Activated CD4-positive, alpha-beta T cell treated with anti-CD3 and anti-CD28 coated beads, Interleukin-2, amount 10 ng/mL, durations not matched to agents 24 days and 14 days (primary cell): ENCODE measurements at regions of chr16 and their contacts with region 1.

Region 1: DNA sequence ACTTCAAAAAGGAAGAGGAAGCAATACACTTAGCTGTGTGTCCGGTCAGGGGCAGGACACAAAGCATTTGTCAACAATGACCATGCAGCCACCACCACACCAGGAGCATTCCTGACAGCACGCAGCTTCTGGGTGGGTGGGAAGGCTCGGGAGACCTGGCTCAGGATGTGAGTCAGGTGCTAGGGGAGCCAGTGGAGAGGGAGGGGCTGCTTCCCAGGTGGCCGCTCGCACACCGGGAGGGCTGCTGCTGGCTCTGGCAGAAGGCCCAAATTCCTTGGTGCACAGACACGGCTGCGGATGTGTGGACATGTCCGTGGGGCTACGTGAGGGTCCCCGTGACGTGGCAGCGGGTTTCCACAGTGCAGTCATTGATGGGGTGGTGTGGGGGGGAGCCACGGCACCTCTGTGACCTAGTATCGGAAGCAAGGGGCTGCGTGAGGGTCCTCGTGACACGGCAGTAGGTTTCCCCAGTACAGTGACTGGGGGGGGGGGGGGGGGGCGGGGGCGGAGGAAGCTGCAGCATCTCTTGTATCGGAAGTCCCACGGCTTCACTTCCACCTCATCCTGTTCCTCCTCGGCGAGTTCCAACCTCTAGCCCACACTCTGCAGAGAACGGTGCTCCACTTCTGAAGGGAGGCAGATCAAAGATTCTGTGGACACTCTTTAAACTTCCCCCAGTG is 112.8 kb downstream of the ZNF778 start:
- DNase-seq: peak; percentile 80
- H3K4me3 Mint-ChIP-seq: peak overlapping the region; percentile 17
- H3K27ac Mint-ChIP-seq: peak overlapping the region; percentile 58
- H3K4me1 Mint-ChIP-seq: peaks cover 67% of the 10 kb centered on the region
- H3K27me3 Mint-ChIP-seq: no peaks in the 10 kb centered on the region

Region 2: GRCh38 chr16:89319883-89320781 is 10.2 kb before region 1 on chr16:
- intact Hi-C with region 1: no loop called
- DNase-seq: peak; percentile 77
- H3K4me3 Mint-ChIP-seq: peak overlapping the region; percentile 71
- H3K27ac Mint-ChIP-seq: peak overlapping the region; percentile 88
- H3K4me1 Mint-ChIP-seq: peaks cover 83% of the 10 kb centered on the region
- H3K27me3 Mint-ChIP-seq: no peaks in the 10 kb centered on the region

Region 3: GRCh38 chr16:89422905-89423630 is 92.8 kb after region 1 on chr16:
- intact Hi-C with region 1: loop called (anchors 5 kb)
- DNase-seq: peak; percentile 81
- H3K4me3 Mint-ChIP-seq: peak overlapping the region; percentile 50
- H3K27ac Mint-ChIP-seq: peak overlapping the region; percentile 75
- H3K4me1 Mint-ChIP-seq: peaks cover 66% of the 10 kb centered on the region
- H3K27me3 Mint-ChIP-seq: no peaks in the 10 kb centered on the region

Region 4: DNA sequence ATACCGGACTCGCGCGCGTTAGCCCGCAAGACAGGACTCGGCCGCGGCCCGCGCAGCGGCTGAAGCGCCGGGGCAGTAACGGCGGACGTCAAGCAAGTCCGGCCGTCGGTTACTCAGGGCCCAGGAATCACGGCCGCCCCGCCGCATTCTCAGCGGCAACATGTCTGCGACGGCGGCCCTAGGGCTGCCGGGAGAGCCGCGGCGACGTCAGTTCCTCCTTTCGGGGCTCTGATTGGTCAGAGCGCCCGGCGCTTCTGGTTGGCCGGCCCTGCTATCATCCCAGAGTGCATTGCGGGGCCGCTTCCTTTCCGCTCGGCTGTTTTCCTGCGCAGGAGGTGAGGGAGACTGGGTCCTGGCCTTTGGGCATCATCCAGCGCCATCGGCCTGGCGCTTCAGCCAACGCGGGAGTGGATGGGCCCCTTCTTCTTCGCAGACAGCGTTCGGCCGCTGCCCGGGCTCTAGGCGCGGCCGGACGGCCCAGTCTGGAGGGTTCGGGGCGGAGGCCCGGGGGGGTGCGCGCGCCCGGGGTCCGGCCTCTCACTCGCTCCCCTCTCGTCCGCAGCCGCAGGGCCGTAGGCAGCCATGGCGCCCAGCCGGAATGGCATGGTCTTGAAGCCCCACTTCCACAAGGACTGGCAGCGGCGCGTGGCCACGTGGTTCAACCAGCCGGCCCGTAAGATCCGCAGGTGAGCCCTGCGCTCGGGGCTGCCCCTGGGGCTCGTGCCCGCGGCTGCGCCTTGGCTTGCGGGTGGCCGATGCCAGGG is 230.2 kb after region 1 on chr16 and contains the start of gene RPL13:
- intact Hi-C with region 1: loop called (anchors 5 kb)
- DNase-seq: peak; percentile 98
- H3K4me3 Mint-ChIP-seq: peak within 1 kb of the TSS; percentile 94
- H3K27ac Mint-ChIP-seq: peak within 1 kb of the TSS; percentile 99
- H3K4me1 Mint-ChIP-seq: peaks cover 44% of the 10 kb centered on the region
- H3K27me3 Mint-ChIP-seq: no peaks in the 10 kb centered on the region
- total RNA-seq, gene RPL13: 2,234 and 2,296 TPM in 2 replicates